ENCODE measurements at regions of chr12 and their contacts with region 1.

Region 1: GRCh38 chr12:2862876-2863275 is 6.0 kb upstream of the TEX52 start:
- DNase-seq: no peak
- H3K4me3 Mint-ChIP-seq: no peak overlapping the region
- H3K27ac Mint-ChIP-seq: no peak overlapping the region
- H3K4me1 Mint-ChIP-seq: no peaks in the 10 kb centered on the region
- H3K27me3 Mint-ChIP-seq: no peaks in the 10 kb centered on the region

Region 2: DNA sequence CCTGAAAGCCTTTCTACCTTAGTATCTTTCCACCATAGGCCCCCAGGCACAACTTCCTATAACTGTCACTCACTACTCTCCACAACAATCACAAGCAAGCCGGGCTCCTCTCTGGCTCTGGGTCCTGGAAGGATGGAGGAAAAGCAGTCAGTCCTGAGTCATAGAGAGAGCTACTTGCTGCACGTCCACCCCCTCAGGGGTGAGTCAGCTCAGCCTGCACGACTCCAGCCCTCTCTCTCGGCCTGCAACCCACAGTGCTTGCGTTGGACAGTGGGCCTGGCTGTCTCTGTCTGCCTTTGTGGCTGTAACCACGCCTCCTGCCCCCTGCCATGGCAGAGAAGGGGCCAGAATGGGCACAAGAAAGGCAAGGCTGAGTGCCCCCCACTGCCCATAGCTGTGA is 222.2 kb before region 1 on chr12:
- CTCF ChIA-PET with region 1: no interaction called
- intact Hi-C with region 1: no loop called
- DNase-seq: no peak
- H3K4me3 Mint-ChIP-seq: no peak overlapping the region
- H3K27ac Mint-ChIP-seq: no peak overlapping the region
- H3K4me1 Mint-ChIP-seq: peaks cover 16% of the 10 kb centered on the region
- H3K27me3 Mint-ChIP-seq: peaks cover 13% of the 10 kb centered on the region

Region 3: GRCh38 chr12:2959505-2960389 is 96.9 kb after region 1 on chr12:
- CTCF ChIA-PET with region 1: no interaction called
- intact Hi-C with region 1: loop called (anchors 5 kb)
- DNase-seq: peak; percentile 11
- H3K4me3 Mint-ChIP-seq: peak overlapping the region; percentile 67
- H3K27ac Mint-ChIP-seq: no peak overlapping the region
- H3K4me1 Mint-ChIP-seq: peaks cover 15% of the 10 kb centered on the region
- H3K27me3 Mint-ChIP-seq: peaks cover 63% of the 10 kb centered on the region